A673 (cell line): ENCODE measurements at regions of chr16 and their contacts with region 1.

Region 1: DNA sequence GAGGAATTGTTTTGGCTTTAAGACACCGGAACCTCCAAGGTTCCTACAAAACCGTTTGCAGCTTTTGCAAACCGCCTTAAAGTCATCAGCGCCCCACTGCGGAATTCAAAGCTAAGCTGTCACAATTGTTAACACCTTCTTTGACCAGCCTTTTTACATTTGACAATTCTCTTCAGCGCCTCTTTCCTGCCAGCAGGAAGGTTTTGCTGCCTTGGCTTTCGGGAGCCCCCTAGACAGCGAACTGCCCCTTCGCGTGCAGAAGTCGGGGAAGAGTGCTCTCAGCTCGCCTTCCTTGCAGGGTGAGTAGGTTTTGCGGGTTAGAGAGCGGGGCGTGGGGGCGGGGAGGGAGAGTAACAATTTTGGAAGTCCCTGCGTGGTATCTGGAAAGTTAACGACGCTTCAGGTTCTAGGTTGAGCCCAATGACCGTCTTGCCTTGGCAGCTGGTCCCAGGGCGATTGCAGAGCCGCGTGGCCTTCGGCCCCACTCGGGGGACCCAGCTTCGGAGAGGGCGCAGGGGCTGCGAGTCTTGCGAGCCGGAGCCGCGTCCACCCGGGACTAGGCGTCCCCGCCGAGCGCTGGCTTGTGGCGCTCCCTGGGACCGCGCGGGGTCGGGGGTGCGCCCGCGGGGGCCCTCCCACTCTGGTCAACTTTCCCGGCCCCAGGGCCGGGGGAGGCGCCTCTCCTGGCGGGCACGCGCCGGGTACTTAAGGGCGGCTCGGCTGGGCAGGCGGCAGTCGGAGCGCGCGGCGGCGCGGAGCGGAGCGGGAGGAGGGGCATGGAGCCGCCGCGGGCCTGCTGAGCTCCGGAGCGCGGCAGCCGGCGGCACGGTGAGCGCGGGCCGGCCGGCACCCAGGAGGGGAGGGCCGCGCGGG is at the start of gene HAS3:
- DNase-seq: peak; percentile 79
- H3K4me3 ChIP-seq: peak within 1 kb of the TSS; percentile 66
- H3K27ac ChIP-seq: no peak within 1 kb of the TSS
- H3K4me1 ChIP-seq: peaks cover 8% of the 10 kb centered on the region
- H3K27me3 ChIP-seq: no peaks in the 10 kb centered on the region
- CTCF ChIP-seq: peak; percentile 63
- total RNA-seq, gene HAS3: 0.49 and 0.72 TPM in 2 replicates

Region 2: GRCh38 chr16:68528686-68529379 is 576.9 kb before region 1 on chr16:
- CTCF ChIA-PET with region 1: interaction called, 5 read pairs
- POLR2A ChIA-PET with region 1: no interaction called
- intact Hi-C with region 1: loop called (anchors 1 kb)
- DNase-seq: peak; percentile 88
- H3K4me3 ChIP-seq: peak overlapping the region; percentile 62
- H3K27ac ChIP-seq: no peak overlapping the region
- H3K4me1 ChIP-seq: peaks cover 8% of the 10 kb centered on the region
- H3K27me3 ChIP-seq: no peaks in the 10 kb centered on the region
- CTCF ChIP-seq: peak; percentile 91

Region 3: DNA sequence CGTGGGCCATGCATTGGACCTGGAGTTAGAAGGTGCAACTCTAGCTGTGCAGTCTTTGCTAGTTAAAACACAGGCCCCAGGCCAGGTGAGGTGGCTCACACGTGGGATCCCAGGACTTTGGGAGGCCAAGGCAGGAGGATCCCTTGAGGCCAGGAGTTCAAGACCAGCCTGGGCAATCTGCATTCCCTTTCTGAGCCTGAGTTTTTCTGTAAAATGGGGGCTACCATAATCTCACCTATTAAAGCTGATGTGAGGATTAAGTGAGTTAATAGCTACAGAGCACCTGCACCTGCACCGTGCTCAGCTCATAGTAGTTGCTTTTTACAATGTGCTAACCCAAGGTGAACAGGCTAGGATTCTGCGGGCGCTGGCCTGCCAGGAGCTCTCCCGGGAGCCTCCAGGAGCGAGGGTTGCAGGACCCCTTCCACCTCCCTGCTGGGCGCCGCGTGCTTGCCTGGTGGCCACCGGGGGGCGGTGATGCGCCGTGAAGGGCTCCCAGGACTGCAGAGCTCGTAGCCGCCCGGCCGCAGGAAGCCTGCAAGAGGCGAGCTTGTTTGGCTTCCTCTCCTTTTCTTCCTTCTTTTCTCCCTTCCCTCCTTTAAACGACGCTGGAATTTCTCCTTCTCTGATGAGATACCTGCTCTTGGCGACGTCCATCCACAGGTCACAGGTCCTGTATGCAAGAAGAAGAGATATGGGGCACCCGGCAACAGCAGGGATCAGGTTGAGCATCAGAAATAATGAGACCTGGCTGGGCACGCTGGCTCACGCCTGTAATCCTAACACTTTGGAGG is 515.3 kb before region 1 on chr16:
- CTCF ChIA-PET with region 1: no interaction called
- POLR2A ChIA-PET with region 1: no interaction called
- intact Hi-C with region 1: loop called (anchors 5 kb)
- DNase-seq: peak; percentile 65
- H3K4me3 ChIP-seq: no peak overlapping the region
- H3K27ac ChIP-seq: no peak overlapping the region
- H3K4me1 ChIP-seq: no peaks in the 10 kb centered on the region
- H3K27me3 ChIP-seq: no peaks in the 10 kb centered on the region
- CTCF ChIP-seq: peak; percentile 83

Region 4: DNA sequence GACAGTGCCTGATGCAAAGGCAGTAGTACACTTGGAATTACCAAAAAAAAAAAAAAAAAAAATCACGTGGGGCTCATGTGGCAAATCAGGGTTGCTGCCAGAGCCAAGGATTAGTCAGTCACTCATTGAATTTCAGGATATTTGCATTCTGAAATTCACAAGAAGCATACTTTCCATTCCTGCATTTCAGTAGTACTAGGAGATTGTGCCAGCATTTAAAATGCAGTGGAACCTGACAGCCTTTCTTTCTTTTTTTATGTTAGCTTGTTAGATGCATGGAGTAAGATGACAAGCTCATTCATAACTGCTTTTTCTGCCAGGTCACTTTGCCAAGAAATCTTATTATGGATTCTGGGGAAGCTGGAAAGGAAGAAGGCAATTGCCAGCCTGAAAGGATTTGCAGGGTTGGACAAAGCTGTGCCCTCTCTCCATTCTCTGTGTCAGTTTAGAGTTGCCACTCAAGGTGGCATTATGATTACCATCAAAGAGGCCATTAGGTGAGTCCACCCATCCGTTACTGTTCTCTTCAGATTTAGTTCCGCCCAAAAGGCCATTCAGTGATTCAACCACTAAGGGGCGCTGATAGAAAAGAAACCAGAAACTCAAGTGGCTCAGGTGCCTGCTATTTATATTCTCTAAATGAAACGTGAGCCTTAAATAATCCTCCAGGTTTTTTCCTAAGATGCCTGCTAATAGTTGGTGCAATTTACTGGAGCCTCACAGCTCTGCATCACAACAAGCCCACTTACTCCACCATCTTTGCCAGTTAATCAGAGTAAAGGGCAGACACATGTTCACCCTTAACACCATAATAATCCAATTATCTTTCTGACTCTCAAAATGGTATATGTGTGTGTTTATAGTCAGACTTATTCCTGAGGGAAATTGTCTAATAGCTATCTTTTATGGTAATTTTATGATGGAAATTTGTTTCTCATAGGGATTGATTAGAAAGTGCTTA is 203.4 kb before region 1 on chr16:
- CTCF ChIA-PET with region 1: no interaction called
- POLR2A ChIA-PET with region 1: no interaction called
- intact Hi-C with region 1: loop called (anchors 1 kb)
- DNase-seq: peak; percentile 68
- H3K4me3 ChIP-seq: no peak overlapping the region
- H3K27ac ChIP-seq: peak overlapping the region; percentile 9
- H3K4me1 ChIP-seq: peaks cover 17% of the 10 kb centered on the region
- H3K27me3 ChIP-seq: no peaks in the 10 kb centered on the region
- CTCF ChIP-seq: peak; percentile 86

Region 5: GRCh38 chr16:68995011-68995504 is 110.7 kb before region 1 on chr16:
- CTCF ChIA-PET with region 1: no interaction called
- POLR2A ChIA-PET with region 1: no interaction called
- intact Hi-C with region 1: loop called (anchors 5 kb)
- DNase-seq: peak; percentile 70
- H3K4me3 ChIP-seq: no peak overlapping the region
- H3K27ac ChIP-seq: no peak overlapping the region
- H3K4me1 ChIP-seq: peaks cover 30% of the 10 kb centered on the region
- H3K27me3 ChIP-seq: no peaks in the 10 kb centered on the region
- CTCF ChIP-seq: peak; percentile 62

Region 6: GRCh38 chr16:69073161-69073669 is 32.5 kb before region 1 on chr16:
- CTCF ChIA-PET with region 1: no interaction called
- POLR2A ChIA-PET with region 1: interaction called, 11 read pairs
- intact Hi-C with region 1: no loop called
- DNase-seq: no peak
- H3K4me3 ChIP-seq: no peak overlapping the region
- H3K27ac ChIP-seq: no peak overlapping the region
- H3K4me1 ChIP-seq: peaks cover 15% of the 10 kb centered on the region
- H3K27me3 ChIP-seq: no peaks in the 10 kb centered on the region
- CTCF ChIP-seq: no peak